ENCODE measurements at regions of chr4 and their contacts with region 1.

Region 1: GRCh38 chr4:89226665-89227574 is 80.7 kb downstream of the GPRIN3 start:
- DNase-seq: peak; percentile 82
- ATAC-seq: peak; percentile 99
- H3K4me3 ChIP-seq: no peak overlapping the region
- H3K27ac ChIP-seq: no peak overlapping the region
- H3K4me1 ChIP-seq: peaks cover 0 to 12% of the 10 kb centered on the region in 2 experiments; a peak in 2 of 4 replicates
- H3K27me3 ChIP-seq: no peaks in the 10 kb centered on the region
- CTCF ChIP-seq: peak; percentile 71 to 80 (median 74); a peak in 5 of 6 replicates
- POLR2A ChIP-seq: no peak
- RAD21 ChIP-seq: peak; percentile 82

Region 2: DNA sequence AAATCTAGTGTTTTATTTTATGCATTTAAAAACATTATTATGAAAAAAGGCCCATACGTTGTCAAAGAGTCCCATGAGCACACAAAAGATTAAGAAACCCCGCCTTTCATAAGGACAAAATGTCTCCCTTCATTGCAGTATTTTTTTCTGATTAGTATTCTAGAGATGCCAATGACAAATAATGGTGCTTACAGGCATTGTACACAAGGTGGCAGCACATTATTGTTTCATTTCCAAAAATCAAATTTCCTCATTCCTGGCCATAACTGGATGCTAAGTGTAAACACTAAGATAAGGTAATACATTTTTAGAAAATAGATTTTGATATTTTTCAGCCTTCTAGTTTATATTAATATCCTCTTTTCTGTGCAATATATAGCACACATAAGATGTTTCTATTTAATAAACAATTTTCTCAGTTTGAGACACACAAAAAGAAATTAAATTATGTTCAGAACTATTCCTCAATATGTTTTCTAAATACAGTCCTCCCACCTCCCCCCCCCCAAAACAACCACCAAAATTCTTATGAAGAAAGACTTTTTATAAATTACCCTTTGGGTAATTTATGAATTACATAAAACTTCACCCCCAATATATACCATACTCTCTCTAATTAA is 67.9 kb before region 1 on chr4:
- CTCF ChIA-PET with region 1: interaction called, 4 read pairs
- POLR2A ChIA-PET with region 1: no interaction called
- RAD21 ChIA-PET with region 1: no interaction called
- intact Hi-C with region 1: loop called (anchors 2 kb)
- DNase-seq: peak; percentile 43
- ATAC-seq: peak; percentile 80
- H3K4me3 ChIP-seq: no peak overlapping the region
- H3K27ac ChIP-seq: no peak overlapping the region
- H3K4me1 ChIP-seq: no peaks in the 10 kb centered on the region
- H3K27me3 ChIP-seq: no peaks in the 10 kb centered on the region
- CTCF ChIP-seq: peak; percentile 52 to 79 (median 60); a peak in 5 of 6 replicates
- POLR2A ChIP-seq: no peak
- RAD21 ChIP-seq: peak; percentile 76

Region 3: DNA sequence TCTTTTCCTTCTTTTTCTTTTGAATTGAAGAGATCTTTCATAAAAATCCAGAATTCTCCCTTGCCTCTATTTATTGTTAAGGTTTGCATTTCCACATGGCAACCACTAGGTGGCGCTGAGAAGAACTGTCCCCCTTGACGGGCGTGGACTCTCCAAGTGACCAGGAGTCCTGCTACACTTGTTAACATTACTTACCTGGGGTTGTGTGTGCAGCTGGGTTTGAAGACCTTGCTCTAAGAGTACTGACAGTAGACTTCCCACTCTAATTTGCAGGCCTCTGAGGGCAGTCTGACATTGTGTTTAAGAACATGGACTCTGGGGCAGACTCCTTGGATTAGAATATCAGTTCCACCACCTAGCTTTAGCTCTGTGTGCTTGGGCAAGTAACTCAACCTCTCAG is 27.9 kb after region 1 on chr4:
- CTCF ChIA-PET with region 1: interaction called, 10 read pairs
- POLR2A ChIA-PET with region 1: no interaction called
- RAD21 ChIA-PET with region 1: no interaction called
- intact Hi-C with region 1: no loop called
- DNase-seq: peak; percentile 37
- ATAC-seq: peak; percentile 84
- H3K4me3 ChIP-seq: no peak overlapping the region
- H3K27ac ChIP-seq: no peak overlapping the region
- H3K4me1 ChIP-seq: no peaks in the 10 kb centered on the region
- H3K27me3 ChIP-seq: no peaks in the 10 kb centered on the region
- CTCF ChIP-seq: peak; percentile 50 to 93 (median 82); a peak in 5 of 6 replicates
- POLR2A ChIP-seq: no peak
- RAD21 ChIP-seq: peak; percentile 54

Region 4: GRCh38 chr4:89434364-89434988 is 207.6 kb after region 1 on chr4:
- CTCF ChIA-PET with region 1: interaction called, 11 read pairs
- POLR2A ChIA-PET with region 1: no interaction called
- RAD21 ChIA-PET with region 1: no interaction called
- intact Hi-C with region 1: loop called (anchors 1 kb)
- DNase-seq: peak; percentile 18
- ATAC-seq: peak; percentile 60
- H3K4me3 ChIP-seq: no peak overlapping the region
- H3K27ac ChIP-seq: no peak overlapping the region
- H3K4me1 ChIP-seq: peaks cover 0 to 6% of the 10 kb centered on the region in 2 experiments; a peak in 1 of 4 replicates
- H3K27me3 ChIP-seq: no peaks in the 10 kb centered on the region
- CTCF ChIP-seq: peak; percentile 63 to 77 (median 76)
- POLR2A ChIP-seq: no peak
- RAD21 ChIP-seq: peak; percentile 79

Region 5: DNA sequence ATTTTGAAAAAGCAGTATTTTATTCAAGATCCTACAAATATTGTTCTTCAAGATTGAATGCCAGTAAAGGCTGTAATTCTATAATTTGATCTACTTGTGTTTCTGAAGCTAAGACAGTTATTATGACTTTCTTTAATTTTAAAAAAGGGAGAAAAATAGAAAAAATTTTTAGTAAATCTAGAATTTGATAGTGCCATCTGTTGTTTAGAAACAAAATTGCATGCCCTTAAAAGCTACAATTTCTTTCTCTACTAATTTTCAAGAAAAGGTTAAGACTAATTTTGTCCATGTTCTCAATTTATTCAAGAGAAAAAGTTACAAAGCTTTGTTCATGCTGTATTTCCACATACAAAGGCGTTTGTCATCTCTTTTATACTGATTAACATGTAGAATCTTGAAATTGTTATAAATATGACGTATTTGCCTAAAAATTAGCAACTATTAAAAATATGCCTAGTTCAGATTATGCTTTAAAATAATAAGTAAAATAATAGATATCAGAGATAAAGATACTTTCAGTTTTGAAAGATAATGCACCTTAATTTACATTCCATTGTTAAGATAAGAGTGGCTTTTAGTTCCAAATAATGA is 642.2 kb after region 1 on chr4:
- CTCF ChIA-PET with region 1: interaction called, 4 read pairs
- POLR2A ChIA-PET with region 1: no interaction called
- RAD21 ChIA-PET with region 1: no interaction called
- intact Hi-C with region 1: loop called (anchors 5 kb)
- DNase-seq: no peak
- ATAC-seq: no peak
- H3K4me3 ChIP-seq: no peak overlapping the region
- H3K27ac ChIP-seq: no peak overlapping the region
- H3K4me1 ChIP-seq: no peaks in the 10 kb centered on the region
- H3K27me3 ChIP-seq: no peaks in the 10 kb centered on the region
- CTCF ChIP-seq: peak; percentile 34 to 50 (median 37); a peak in 5 of 6 replicates
- POLR2A ChIP-seq: no peak
- RAD21 ChIP-seq: peak; percentile 41; the same call in 1 of the 2 replicates

Region 6: GRCh38 chr4:89906777-89907521 is 680.0 kb after region 1 on chr4:
- CTCF ChIA-PET with region 1: no interaction called
- POLR2A ChIA-PET with region 1: no interaction called
- RAD21 ChIA-PET with region 1: no interaction called
- intact Hi-C with region 1: loop called (anchors 10 kb)
- DNase-seq: no peak
- ATAC-seq: no peak
- H3K4me3 ChIP-seq: no peak overlapping the region
- H3K27ac ChIP-seq: no peak overlapping the region
- H3K4me1 ChIP-seq: no peaks in the 10 kb centered on the region
- H3K27me3 ChIP-seq: no peaks in the 10 kb centered on the region
- CTCF ChIP-seq: no peak
- POLR2A ChIP-seq: no peak
- RAD21 ChIP-seq: no peak

Region 7: DNA sequence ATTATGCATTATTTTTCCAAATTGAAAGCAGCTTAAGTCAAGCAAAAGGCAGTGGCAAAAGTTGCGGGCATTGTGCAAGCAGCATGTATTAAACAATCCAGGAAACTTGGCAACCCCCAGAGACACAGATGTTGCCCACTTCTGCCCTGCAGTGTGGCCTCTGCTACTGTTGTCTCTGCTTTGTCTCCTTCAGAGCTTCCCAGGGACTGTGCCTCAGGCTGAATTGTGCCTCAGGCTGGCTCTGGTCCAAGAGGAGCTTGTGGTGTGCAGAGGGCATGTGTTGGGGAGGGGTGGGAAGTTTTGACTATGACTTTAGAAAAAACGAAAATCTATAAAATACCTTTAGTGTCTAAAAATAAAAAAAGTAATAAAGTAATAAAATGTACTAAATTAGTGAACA is 1101.6 kb after region 1 on chr4:
- CTCF ChIA-PET with region 1: no interaction called
- POLR2A ChIA-PET with region 1: no interaction called
- RAD21 ChIA-PET with region 1: no interaction called
- intact Hi-C with region 1: no loop called
- DNase-seq: peak; percentile 44
- ATAC-seq: peak; percentile 91
- H3K4me3 ChIP-seq: no peak overlapping the region
- H3K27ac ChIP-seq: no peak overlapping the region
- H3K4me1 ChIP-seq: peaks cover 10 to 20% of the 10 kb centered on the region in 2 experiments
- H3K27me3 ChIP-seq: no peaks in the 10 kb centered on the region
- CTCF ChIP-seq: no peak
- POLR2A ChIP-seq: no peak
- RAD21 ChIP-seq: no peak